ENCODE measurements at regions of chr13 and their contacts with region 1.

Region 1: GRCh38 chr13:47647001-47647400 is 354.1 kb downstream of the SUCLA2 start:
- DNase-seq: no peak
- ATAC-seq: no peak
- H3K4me3 ChIP-seq: no peak overlapping the region
- H3K27ac ChIP-seq: no peak overlapping the region
- H3K4me1 ChIP-seq: no peaks in the 10 kb centered on the region
- H3K27me3 ChIP-seq: no peaks in the 10 kb centered on the region
- CTCF ChIP-seq: no peak
- POLR2A ChIP-seq: no peak

Region 2: GRCh38 chr13:47661076-47661475 is 14.1 kb after region 1 on chr13:
- in situ Hi-C with region 1: no loop called
- intact Hi-C with region 1: loop called (anchors 1 kb)
- DNase-seq: no peak
- ATAC-seq: no peak
- H3K4me3 ChIP-seq: no peak overlapping the region
- H3K27ac ChIP-seq: no peak overlapping the region
- H3K4me1 ChIP-seq: no peaks in the 10 kb centered on the region
- H3K27me3 ChIP-seq: no peaks in the 10 kb centered on the region
- CTCF ChIP-seq: no peak
- POLR2A ChIP-seq: no peak

Region 3: DNA sequence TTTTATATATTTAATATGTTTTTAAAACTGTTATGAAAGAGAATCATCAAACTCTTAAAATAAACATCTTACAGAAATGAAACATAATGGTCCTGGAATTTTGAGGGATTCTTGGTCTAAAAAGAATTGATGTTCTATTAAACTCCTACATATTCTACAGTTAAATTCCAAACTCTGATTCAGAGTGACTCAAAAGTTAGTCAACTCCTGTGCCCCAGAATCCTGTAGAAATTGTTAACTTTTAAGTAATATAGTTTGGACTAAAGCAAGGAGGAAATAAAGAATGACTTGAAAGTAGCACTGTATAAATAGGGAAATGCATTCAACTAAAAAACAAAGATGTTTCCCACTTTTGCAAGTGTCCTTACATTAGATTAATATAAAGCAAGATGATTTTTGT is 1376.4 kb after region 1 on chr13:
- in situ Hi-C with region 1: no loop called
- intact Hi-C with region 1: no loop called
- DNase-seq: no peak
- ATAC-seq: no peak
- H3K4me3 ChIP-seq: no peak overlapping the region
- H3K27ac ChIP-seq: no peak overlapping the region
- H3K4me1 ChIP-seq: no peaks in the 10 kb centered on the region
- H3K27me3 ChIP-seq: no peaks in the 10 kb centered on the region
- CTCF ChIP-seq: no peak
- POLR2A ChIP-seq: no peak